ENCODE measurements at regions of chr22 and their contacts with region 1.

Region 1: GRCh38 chr22:40193429-40194421 is 16.0 kb downstream of the TNRC6B start:
- H3K4me3 ChIP-seq: no peak overlapping the region
- H3K27ac ChIP-seq: no peak overlapping the region
- H3K4me1 ChIP-seq: peaks cover 9% of the 10 kb centered on the region
- CTCF ChIP-seq: no peak; the same call in 1 of the 2 replicates

Region 2: DNA sequence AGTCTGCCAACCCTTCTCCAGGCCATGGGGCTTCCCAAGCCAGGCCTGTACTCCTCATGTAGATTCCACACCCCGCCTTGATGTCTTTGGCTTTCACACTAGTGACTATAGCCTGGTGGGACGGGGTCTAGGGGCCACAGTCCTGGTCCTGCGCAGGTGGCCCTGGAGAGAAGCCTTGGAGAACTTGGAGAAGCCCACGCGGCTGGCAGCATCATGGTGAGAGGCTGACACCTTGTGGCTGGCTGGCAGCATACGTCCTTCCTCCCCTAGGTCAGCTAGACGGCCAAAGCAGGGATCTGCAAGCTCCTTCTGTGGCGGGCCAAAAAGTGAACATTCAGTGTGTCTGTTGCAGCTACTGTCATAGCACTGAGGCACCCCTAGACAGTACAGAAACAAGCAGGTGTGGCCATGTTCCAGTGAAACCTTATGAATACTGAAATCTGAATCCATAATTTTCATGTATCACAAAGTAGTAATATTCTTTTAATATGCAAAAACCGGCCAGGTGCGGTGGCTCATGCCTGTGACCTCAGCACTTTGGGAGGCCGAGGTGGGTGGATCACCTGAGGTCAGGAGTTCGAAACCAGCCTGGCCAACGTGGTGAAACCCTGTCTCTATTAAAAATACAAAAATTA is 157.0 kb before region 1 on chr22:
- CTCF ChIA-PET with region 1: interaction called, 10 read pairs
- POLR2A ChIA-PET with region 1: no interaction called
- H3K4me3 ChIP-seq: no peak overlapping the region
- H3K27ac ChIP-seq: no peak overlapping the region
- H3K4me1 ChIP-seq: peaks cover 16% of the 10 kb centered on the region
- CTCF ChIP-seq: peak; percentile 83

Region 3: DNA sequence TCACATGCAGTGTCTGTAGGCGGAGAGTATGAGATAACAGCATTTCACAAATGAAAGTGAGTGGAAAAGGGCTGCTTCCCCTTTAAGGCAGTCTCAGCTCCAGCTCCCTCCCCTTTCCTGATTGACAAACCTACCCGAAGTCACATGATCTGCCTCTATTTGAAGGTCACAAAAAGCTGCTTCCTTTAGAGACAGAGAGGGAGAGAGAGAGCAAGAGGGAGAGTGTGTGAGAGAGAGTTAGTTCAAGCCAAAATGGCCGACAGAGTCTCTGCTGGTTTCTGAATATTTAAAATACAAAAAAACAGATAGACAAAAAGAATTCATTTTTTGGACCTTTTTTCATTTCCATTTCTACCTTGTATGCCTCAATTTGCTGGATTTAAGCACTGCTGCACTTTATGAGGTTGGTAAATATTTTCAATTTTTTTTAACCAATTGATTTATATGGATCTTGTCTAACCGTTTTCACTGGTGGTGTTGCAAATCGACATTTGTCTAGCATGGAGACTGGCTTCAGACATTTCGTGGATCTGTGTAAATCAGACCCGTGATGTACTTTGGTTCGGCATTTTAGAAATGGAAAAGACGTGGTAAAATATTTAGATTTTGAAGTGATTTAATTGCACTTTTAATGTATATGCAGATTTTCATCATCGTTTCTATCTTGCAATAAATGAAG is 15.8 kb before region 1 on chr22 and contains the start of gene TNRC6B:
- CTCF ChIA-PET with region 1: interaction called, 16 read pairs
- POLR2A ChIA-PET with region 1: interaction called, 9 read pairs
- H3K4me3 ChIP-seq: peak within 1 kb of the TSS; percentile 76
- H3K27ac ChIP-seq: peak within 1 kb of the TSS; percentile 73
- H3K4me1 ChIP-seq: peaks cover 23% of the 10 kb centered on the region
- CTCF ChIP-seq: no peak

Region 4: DNA sequence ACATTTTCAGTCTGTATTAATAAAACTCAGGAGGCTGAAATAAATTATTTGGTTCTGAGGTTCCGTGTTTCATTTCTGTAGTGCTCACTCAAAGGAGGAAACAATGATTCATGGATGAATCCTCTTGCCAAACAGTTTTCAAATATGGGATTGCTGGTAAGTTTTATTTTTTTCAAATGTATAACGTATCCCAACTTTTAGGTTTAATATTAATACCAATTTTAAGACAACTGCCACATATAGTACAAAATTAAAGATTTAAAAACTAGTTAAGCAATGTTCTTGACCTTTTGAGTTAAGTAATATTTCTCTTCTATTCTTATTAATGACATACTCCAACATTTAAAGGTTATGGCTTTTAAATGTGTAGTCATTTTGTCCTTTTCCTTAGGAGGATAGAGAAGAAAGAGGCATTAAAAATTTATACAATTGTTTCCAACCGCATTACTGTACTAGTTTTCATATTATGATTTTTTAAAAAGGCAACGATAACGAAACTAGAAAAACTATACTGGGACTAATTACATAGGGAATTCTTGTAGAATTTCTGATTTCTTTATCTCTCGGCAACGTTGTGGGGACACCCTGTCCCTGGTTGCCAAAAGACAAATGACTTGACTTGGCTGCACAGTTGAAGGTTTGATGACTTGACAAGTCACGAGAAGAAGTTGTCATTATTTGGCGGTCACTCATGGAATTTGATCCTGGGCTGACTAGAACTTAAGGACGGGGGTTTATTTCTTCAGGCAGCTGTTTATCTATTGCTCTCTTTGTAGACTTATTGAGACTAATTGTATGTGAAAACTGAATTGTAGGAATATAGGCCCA is 83.5 kb after region 1 on chr22:
- CTCF ChIA-PET with region 1: no interaction called
- POLR2A ChIA-PET with region 1: no interaction called
- H3K4me3 ChIP-seq: no peak overlapping the region
- H3K27ac ChIP-seq: no peak overlapping the region
- H3K4me1 ChIP-seq: no peaks in the 10 kb centered on the region
- CTCF ChIP-seq: no peak

Region 5: DNA sequence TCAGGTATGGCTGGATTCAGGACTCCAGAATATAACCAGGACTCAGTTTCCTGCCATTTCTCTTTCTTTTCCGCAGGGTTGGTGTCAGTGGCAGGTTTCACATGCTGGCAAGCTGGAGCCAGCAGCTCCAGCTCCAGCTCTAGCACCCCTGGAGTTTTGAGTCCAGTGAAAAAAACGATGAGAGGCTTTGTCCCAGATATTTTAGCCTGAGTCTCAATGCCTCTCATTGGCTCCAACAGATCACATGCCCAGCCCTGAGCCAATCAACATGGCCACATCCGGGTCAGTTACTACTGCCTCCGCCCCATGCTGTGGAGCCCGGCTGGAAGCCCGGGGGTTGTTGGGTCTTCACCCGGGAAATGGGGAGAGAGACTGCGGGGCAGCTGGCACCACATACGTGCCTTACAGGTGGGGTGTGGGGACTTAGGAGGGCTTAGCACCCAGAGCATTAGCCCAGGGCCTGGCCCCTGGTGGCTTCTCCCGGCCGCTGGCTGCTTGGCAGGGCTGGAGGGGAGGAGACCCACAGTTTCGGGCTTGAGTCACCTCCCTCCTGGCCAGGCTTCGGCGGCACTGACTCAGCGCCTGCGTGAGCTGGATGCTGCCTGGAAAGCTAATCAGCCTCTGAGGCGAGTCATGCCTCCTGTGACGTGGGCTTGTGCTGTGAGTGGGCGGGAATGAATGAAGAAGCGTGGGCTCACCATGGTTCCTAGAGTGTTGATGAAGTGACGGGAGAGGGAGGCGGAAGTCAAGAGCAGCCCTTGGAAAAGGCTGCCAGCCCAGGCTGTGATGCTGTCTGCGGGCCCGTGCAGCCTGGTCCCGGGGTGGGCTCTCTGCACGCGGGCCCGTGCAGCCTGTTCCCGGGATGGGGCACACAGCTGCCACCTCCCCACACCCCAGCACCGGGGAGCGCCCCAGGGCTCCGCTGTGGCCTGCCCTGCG is 458.1 kb after region 1 on chr22:
- CTCF ChIA-PET with region 1: no interaction called
- POLR2A ChIA-PET with region 1: no interaction called
- H3K4me3 ChIP-seq: peak overlapping the region; percentile 71
- H3K27ac ChIP-seq: peak overlapping the region; percentile 88
- H3K4me1 ChIP-seq: peaks cover 3% of the 10 kb centered on the region; the same call in 1 of the 2 replicates
- CTCF ChIP-seq: no peak